BJ (cell line): ENCODE measurements at regions of chr15 and their contacts with region 1.

Region 1: DNA sequence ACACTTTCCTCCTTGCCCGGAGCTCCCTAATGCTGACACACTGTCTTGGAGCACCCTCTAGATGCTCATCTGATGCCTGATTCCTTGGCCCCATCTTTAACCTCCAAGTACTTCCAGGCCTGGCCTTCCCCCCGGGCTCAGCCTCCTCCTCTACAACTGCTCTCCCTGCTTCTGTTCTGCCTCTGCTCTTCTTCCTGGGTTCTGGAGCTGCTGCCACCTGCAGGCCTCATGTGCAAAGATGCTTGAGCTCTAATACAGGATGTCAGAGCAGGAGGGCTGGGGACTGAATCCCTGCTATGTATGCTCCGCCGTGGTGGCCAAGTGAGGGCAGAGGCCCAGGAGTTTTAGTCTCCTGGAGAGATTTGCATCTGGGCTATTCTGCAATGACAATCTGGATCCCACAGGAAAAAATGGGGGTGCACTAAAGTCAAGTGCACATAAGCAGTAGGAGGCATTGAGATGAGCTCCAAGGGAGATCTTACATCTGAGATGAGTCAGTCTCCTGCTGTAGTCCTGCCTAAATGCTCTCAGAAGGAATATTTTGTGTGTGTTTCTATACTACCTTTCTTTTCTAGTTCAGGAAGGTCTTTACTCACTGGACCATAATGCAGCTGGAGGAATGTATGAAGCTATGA is 296.3 kb downstream of the UACA start:
- DNase-seq: no peak
- H3K4me3 ChIP-seq: no peak overlapping the region
- H3K27me3 ChIP-seq: peaks cover 22% of the 10 kb centered on the region
- CTCF ChIP-seq: peak; percentile 80

Region 2: GRCh38 chr15:69475769-69476358 is 991.1 kb before region 1 on chr15:
- CTCF ChIA-PET with region 1: interaction called, 45 read pairs
- POLR2A ChIA-PET with region 1: no interaction called
- DNase-seq: no peak
- H3K4me3 ChIP-seq: no peak overlapping the region
- H3K27me3 ChIP-seq: peaks cover 3% of the 10 kb centered on the region; the same call in 1 of the 2 replicates
- CTCF ChIP-seq: peak; percentile 95

Region 3: DNA sequence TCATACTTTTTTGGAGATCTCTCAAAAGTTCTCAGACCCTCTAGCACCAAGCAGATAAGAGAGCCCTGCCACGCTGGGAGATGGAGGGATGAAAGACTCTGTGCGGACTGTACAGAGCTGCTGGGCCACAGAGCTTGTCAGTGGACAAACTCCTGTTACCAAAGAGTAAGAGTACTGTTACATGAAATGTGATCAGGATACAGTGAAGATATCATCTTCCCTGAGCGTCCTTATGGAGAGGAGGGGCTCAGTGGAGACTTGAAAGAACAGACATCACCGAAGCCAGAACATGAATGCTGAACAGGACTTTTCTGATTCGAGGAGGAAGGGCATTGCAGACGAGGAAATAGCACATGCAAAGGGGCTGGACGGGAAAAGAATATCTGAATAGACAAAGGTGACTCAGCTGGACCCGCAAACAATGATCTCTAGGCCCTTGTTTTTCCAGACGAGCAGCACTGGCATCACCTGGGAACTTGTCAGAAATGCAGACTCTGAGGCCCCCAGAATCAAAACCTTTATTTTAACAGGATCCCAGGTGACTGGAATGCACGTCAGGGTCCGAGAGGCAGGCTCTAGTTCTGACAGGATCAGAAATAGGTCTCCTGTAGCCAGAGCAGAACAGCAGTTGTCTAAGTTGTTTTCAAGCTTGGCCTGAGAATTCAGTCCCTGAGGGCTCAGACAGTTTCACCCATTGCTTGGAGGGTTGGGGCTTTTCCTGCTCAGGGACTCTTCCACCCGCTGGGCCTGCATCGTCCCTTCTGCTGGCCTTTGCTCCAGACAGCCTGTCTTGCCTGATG is 736.5 kb before region 1 on chr15:
- CTCF ChIA-PET with region 1: interaction called, 12 read pairs
- POLR2A ChIA-PET with region 1: no interaction called
- DNase-seq: no peak
- H3K4me3 ChIP-seq: no peak overlapping the region
- H3K27me3 ChIP-seq: peaks cover 6% of the 10 kb centered on the region
- CTCF ChIP-seq: no peak

Region 4: GRCh38 chr15:70439304-70439877 is 27.6 kb before region 1 on chr15:
- CTCF ChIA-PET with region 1: interaction called, 13 read pairs
- POLR2A ChIA-PET with region 1: no interaction called
- DNase-seq: no peak
- H3K4me3 ChIP-seq: no peak overlapping the region
- H3K27me3 ChIP-seq: peaks cover 25% of the 10 kb centered on the region
- CTCF ChIP-seq: no peak

Region 5: DNA sequence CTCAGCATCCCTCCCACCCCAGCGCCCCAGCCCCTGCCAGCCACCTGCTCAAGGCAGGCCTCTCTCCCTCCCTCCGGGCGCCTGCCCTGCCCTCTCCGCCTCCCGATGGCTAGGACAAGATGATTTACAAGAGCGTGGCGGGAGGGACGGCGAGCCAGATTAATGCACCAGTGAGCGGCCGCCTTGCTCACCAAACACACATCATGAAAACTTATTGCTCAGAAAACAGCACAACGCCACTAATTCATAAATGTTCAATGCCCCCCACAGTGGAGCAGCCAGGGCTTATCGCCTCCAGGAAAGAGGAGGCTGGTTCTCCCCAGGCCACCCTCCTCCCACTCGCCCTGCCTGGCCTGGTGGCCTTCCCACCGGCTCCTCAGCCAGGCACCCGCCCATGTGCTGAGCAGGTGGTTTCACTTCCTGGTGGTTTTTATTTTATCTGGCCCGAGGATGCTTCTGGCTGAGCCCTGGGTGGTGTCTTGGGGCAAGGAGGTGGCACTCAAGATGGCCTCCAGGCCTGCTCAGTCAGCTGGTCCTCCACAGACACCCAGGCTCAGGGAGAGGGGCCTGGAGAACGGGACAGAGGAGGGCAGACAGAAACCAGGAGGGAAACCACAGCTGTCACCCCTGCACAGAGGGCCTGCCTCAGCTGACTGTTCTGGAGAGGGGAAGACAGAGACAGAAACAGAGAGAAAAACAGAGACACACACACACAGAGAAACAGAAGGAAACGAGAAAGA is 11.4 kb after region 1 on chr15:
- CTCF ChIA-PET with region 1: interaction called, 10 read pairs
- POLR2A ChIA-PET with region 1: no interaction called
- DNase-seq: no peak
- H3K4me3 ChIP-seq: no peak overlapping the region
- H3K27me3 ChIP-seq: peaks cover 19% of the 10 kb centered on the region
- CTCF ChIP-seq: no peak

Region 6: DNA sequence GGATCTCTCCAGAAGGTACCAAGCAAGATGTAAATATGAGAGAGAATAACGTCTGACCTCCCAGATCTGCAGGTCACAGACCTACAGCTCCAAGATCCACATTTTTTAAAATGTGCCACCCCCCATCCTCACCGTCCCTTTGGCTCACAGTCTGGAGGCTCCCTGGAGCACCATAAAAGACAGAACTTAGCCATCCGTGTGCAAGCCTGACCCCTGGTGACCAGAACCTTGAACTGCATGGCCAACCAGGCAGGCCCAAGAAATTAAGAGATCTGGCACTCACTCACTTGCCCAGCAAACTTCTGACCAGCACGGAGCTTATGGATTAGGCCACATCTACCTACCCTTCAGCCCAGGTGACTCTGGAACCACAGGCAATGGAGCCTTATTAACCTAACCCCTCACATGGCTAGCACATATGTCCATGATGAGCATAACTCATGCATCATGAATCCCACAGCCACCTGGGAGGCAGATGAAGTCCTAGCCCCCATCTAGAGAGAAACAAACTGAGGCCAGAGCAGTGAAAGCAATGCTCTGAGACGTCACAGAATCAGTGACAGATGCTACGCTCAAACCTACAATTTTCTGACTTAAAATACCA is 21.1 kb after region 1 on chr15:
- CTCF ChIA-PET with region 1: interaction called, 14 read pairs
- POLR2A ChIA-PET with region 1: no interaction called
- DNase-seq: no peak
- H3K4me3 ChIP-seq: no peak overlapping the region
- H3K27me3 ChIP-seq: peaks cover 19% of the 10 kb centered on the region
- CTCF ChIP-seq: peak; percentile 97

Region 7: GRCh38 chr15:70523616-70524015 is 56.6 kb after region 1 on chr15:
- CTCF ChIA-PET with region 1: no interaction called
- POLR2A ChIA-PET with region 1: no interaction called
- DNase-seq: no peak
- H3K4me3 ChIP-seq: no peak overlapping the region
- H3K27me3 ChIP-seq: peaks cover 24% of the 10 kb centered on the region
- CTCF ChIP-seq: no peak